HEK293 (cell line): ENCODE measurements at regions of chr20 and their contacts with region 1.

Region 1: GRCh38 chr20:20837574-20838021 is 125.2 kb upstream of the RALGAPA2 start:
- H3K4me3 ChIP-seq: no peak overlapping the region
- H3K27ac ChIP-seq: no peak overlapping the region
- H3K4me1 ChIP-seq: no peaks in the 10 kb centered on the region
- CTCF ChIP-seq: peak; percentile 51; the same call in 1 of the 2 replicates

Region 2: DNA sequence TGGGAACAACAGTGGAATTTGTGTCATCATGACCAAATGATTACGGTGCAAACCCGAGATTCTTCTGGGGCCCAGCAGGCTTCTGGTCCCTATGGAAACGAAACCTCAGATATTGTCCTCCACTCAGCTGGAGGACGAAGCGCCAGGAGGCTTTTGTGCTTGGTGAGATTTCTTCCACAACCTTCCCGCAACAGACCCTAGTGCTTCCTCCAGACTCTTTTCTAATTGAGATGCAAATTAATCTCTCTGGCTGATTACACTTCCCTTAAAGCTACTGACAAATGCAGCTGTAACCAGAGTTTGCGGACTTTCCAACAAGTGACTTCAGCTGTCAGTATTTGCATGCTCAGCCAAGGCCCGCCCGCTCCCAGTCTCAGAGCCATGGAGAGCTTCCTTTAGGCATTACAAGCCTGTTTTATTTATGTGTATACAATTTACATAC is 373.6 kb before region 1 on chr20:
- CTCF ChIA-PET with region 1: no interaction called
- POLR2A ChIA-PET with region 1: no interaction called
- H3K4me3 ChIP-seq: no peak overlapping the region
- H3K27ac ChIP-seq: no peak overlapping the region
- H3K4me1 ChIP-seq: no peaks in the 10 kb centered on the region; the same call in 1 of the 2 replicates
- CTCF ChIP-seq: no peak

Region 3: GRCh38 chr20:20699144-20699543 is 138.5 kb before region 1 on chr20:
- CTCF ChIA-PET with region 1: no interaction called
- POLR2A ChIA-PET with region 1: no interaction called
- H3K4me3 ChIP-seq: no peak overlapping the region
- H3K27ac ChIP-seq: no peak overlapping the region
- H3K4me1 ChIP-seq: peaks cover 3% of the 10 kb centered on the region; the same call in 1 of the 2 replicates
- CTCF ChIP-seq: no peak

Region 4: DNA sequence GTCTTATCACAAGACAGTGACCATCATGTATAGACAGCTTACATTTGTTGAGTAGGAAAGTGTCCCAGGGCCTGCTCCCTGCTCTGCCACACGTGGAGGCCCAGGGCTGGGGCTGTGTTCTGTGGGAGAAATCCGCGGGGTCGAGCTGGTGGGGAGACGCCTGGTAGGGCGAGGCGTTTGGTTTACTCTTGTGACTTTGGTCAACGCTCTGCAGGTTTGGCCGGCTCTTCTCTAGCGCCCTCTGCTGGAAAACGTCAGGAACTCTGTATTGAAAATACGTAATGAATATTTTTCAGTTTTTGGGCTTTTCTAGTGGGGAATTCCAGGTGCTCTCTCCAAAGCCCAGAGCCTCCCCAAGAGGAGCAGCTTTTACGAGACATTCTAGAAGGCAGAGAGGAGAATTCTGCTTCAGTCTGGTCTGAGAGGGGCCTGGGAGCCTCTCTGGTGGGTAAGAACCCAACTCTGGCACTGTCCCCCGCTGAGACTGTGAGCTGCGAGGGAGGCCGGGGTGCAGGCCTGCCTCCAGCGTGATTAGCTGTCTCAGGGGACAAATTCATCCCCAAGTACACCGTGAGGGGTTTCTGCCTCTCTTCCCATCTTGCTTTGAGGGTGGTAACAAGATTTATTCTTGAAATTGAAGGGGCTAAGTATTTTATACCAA is 12.5 kb before region 1 on chr20:
- CTCF ChIA-PET with region 1: interaction called, 27 read pairs
- POLR2A ChIA-PET with region 1: no interaction called
- H3K4me3 ChIP-seq: no peak overlapping the region
- H3K27ac ChIP-seq: no peak overlapping the region
- H3K4me1 ChIP-seq: no peaks in the 10 kb centered on the region
- CTCF ChIP-seq: peak; percentile 51

Region 5: GRCh38 chr20:20849161-20849560 is 11.6 kb after region 1 on chr20:
- CTCF ChIA-PET with region 1: interaction called, 16 read pairs
- POLR2A ChIA-PET with region 1: no interaction called
- H3K4me3 ChIP-seq: no peak overlapping the region
- H3K27ac ChIP-seq: no peak overlapping the region
- H3K4me1 ChIP-seq: no peaks in the 10 kb centered on the region
- CTCF ChIP-seq: no peak

Region 6: GRCh38 chr20:21505161-21505809 is 667.7 kb after region 1 on chr20:
- CTCF ChIA-PET with region 1: interaction called, 59 read pairs
- POLR2A ChIA-PET with region 1: no interaction called
- H3K4me3 ChIP-seq: peak overlapping the region; percentile 53
- H3K27ac ChIP-seq: peak overlapping the region; percentile 56; the same call in 1 of the 2 replicates
- H3K4me1 ChIP-seq: no peaks in the 10 kb centered on the region
- CTCF ChIP-seq: peak; percentile 89

Region 7: GRCh38 chr20:21520702-21521595 is 683.4 kb after region 1 on chr20:
- CTCF ChIA-PET with region 1: interaction called, 16 read pairs
- POLR2A ChIA-PET with region 1: no interaction called
- H3K4me3 ChIP-seq: peak overlapping the region; percentile 50
- H3K27ac ChIP-seq: peak overlapping the region; percentile 72; the same call in 1 of the 2 replicates
- H3K4me1 ChIP-seq: peaks cover 3% of the 10 kb centered on the region; the same call in 1 of the 2 replicates
- CTCF ChIP-seq: peak; percentile 94

Region 8: GRCh38 chr20:21615617-21616080 is 778.1 kb after region 1 on chr20:
- CTCF ChIA-PET with region 1: interaction called, 19 read pairs
- POLR2A ChIA-PET with region 1: no interaction called
- H3K4me3 ChIP-seq: no peak overlapping the region
- H3K27ac ChIP-seq: no peak overlapping the region
- H3K4me1 ChIP-seq: 0 out of 2 replicates have a peak, but pooled peaks cover 4% of the 10 kb centered on the region
- CTCF ChIP-seq: peak; percentile 75

Region 9: DNA sequence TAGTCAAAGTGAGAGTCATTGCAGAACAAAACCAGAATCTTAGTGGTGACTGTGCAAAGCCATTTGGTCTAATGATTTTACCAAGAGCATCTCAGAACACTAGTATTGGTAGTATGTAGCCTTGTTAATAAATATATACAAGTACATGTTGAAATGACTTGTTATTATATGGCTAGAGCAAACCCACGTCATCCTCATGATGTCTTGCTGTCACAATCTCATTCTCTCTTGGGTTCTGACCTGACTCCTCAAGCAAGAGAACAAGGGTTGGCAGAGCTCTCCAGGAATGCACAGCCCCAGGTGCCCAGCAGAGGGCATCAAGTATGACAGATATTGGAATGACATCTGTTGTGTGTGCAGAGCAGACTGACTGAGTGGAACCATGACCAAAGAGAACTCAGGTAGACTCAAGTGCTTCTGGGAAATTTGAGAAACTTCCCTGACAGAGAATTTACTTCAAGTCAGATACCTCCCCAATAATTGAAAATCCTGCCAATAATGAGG is 958.4 kb after region 1 on chr20:
- CTCF ChIA-PET with region 1: no interaction called
- POLR2A ChIA-PET with region 1: no interaction called
- H3K4me3 ChIP-seq: no peak overlapping the region
- H3K27ac ChIP-seq: no peak overlapping the region
- H3K4me1 ChIP-seq: no peaks in the 10 kb centered on the region
- CTCF ChIP-seq: no peak